ENCODE measurements at regions of chr11 and their contacts with region 1.

Region 1: DNA sequence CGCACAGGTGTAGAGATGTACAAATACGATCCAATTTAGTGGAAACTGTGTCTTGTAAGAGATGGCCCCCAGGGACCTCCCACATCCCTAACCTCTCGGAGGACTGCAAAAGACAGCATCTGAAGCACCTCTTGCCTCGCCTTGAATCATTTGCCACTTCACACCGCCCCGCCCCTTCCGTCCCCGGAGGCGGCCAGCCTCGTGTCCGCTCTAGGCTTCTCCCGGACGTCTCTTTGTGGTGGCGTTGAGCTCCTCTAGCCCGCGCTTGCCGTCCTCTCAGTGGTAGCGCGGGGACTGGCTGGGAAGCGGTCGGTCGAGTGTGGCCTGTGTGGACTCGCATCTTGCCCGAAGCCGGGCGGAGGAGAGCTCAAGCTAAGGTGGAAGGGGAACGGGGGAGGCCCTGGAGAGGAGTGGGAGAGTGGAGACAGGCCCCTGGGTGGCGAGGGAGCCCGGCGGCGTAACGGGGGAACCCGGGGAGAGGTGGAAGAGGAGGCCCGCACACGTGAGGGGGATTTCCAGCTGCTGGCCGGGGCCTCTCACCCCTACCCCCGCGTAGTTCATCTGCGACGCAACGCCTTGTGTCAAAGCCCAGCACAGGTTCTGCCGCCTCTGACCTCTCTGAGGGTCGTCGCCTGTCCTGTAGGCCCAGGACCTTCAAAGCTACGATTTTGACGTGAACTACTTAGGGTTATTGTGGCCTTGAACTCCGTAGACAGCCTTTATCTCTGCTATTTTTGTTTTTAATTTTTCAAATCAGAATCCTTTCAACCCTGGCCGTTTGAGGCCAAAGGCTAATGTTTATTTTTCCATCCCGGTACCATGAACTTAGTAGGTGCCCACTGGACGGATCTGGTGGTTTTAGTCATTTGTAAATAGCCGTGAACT is at the start of gene ARL14EP:
- DNase-seq: peak; percentile 96
- H3K4me3 ChIP-seq: peak within 1 kb of the TSS; percentile 88
- H3K27ac ChIP-seq: peak within 1 kb of the TSS; percentile 76
- H3K4me1 ChIP-seq: peaks cover 53% of the 10 kb centered on the region
- CTCF ChIP-seq: no peak
- total RNA-seq, gene ARL14EP: 30.9 and 37.8 TPM in 2 replicates

Region 2: GRCh38 chr11:30206249-30206996 is 116.6 kb before region 1 on chr11:
- CTCF ChIA-PET with region 1: no interaction called
- POLR2A ChIA-PET with region 1: interaction called, 6 read pairs
- intact Hi-C with region 1: loop called (anchors 2 kb)
- DNase-seq: peak; percentile 41
- H3K4me3 ChIP-seq: no peak overlapping the region
- H3K27ac ChIP-seq: peak overlapping the region; percentile 46
- H3K4me1 ChIP-seq: peaks cover 22% of the 10 kb centered on the region
- CTCF ChIP-seq: no peak

Region 3: DNA sequence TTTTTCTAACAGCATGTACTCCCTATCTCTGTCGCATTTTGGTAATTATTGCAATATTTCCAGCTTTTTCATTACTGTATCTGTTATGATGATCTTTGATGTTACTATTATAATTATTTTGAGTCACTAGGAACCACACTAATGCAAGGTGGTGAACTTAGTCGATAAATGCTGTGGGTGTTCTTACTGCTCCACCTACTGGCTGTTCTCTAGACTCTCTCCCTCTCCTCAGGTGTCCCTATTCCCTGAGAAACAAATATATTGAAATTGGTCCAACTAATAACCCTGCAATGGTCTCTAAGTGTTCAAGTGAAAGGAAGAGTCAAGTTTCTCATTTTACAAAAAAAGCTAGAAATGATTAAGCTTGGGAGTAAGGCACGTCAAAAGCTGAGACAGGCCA is 10.3 kb after region 1 on chr11:
- CTCF ChIA-PET with region 1: interaction called, 6 read pairs
- POLR2A ChIA-PET with region 1: interaction called, 93 read pairs
- intact Hi-C with region 1: no loop called
- DNase-seq: peak; percentile 31
- H3K4me3 ChIP-seq: no peak overlapping the region
- H3K27ac ChIP-seq: no peak overlapping the region
- H3K4me1 ChIP-seq: peaks cover 28% of the 10 kb centered on the region
- CTCF ChIP-seq: peak; percentile 80

Region 4: GRCh38 chr11:30377347-30377746 is 54.3 kb after region 1 on chr11:
- CTCF ChIA-PET with region 1: no interaction called
- POLR2A ChIA-PET with region 1: no interaction called
- intact Hi-C with region 1: no loop called
- DNase-seq: no peak
- H3K4me3 ChIP-seq: no peak overlapping the region
- H3K27ac ChIP-seq: no peak overlapping the region
- H3K4me1 ChIP-seq: no peaks in the 10 kb centered on the region
- CTCF ChIP-seq: no peak

Measured in OCI-LY7 (cell line).